Activated T-helper 2 cell treated with anti-CD3 and anti-CD28 coated beads, Interferon-gamma antibody, Interleukin-2, Interleukin-4, amounts not matched to agents 10 μg/mL and 5 μg/mL and 100 μg/mL, durations not matched to agents 14 hours and 24 hours and 36 hours (primary cell): ENCODE measurements at regions of chr9 and their contacts with region 1.

Region 1: DNA sequence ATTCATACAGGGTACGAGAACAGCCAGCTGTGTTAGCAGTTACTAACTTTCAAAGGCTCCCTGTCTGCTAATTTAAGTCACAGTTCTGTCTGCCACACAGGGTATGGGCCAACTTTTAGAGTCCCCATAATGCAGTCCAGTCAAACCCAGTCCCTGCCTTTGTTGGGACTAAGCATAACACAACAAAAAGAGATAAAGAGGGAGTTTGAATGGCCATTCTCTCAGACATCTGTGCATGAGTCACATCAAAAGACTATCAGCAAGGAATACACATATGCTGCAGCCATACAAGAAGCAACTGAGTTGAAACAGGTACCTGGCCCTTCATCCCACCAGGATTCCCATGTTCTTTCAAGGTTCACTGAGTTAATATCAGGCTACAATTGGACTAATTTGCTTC is 744.5 kb upstream of the C9orf72 start:
- DNase-seq: no peak
- H3K4me3 Mint-ChIP-seq: no peak overlapping the region
- H3K27ac Mint-ChIP-seq: no peak overlapping the region
- H3K4me1 Mint-ChIP-seq: no peaks in the 10 kb centered on the region
- H3K27me3 Mint-ChIP-seq: no peaks in the 10 kb centered on the region

Region 2: DNA sequence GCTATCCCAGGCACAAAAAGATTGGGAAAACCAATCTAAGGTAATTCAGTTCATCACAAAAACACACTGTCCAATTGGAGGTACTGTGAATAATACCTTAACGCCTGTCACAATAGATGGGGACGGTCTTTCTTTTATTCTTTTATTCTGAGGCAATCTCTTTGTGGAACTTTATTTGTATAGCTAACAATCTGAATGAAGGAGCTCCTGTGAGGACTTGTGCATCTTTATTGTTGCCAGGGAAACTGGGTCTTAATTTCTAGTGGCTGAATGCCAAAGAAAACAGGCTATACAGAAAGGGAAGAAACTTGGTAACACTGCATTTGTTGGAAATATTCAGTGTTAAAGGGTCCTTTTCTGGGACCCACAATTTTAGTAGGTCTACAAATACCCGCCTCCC is 197.6 kb before region 1 on chr9:
- intact Hi-C with region 1: loop called (anchors 10 kb)
- DNase-seq: no peak
- H3K4me3 Mint-ChIP-seq: no peak overlapping the region
- H3K27ac Mint-ChIP-seq: no peak overlapping the region
- H3K4me1 Mint-ChIP-seq: no peaks in the 10 kb centered on the region
- H3K27me3 Mint-ChIP-seq: no peaks in the 10 kb centered on the region

Region 3: GRCh38 chr9:28487561-28487960 is 169.8 kb after region 1 on chr9:
- intact Hi-C with region 1: no loop called
- DNase-seq: no peak
- H3K4me3 Mint-ChIP-seq: no peak overlapping the region
- H3K27ac Mint-ChIP-seq: no peak overlapping the region
- H3K4me1 Mint-ChIP-seq: no peaks in the 10 kb centered on the region
- H3K27me3 Mint-ChIP-seq: no peaks in the 10 kb centered on the region